Calu3 (cell line): ENCODE measurements at regions of chr6 and their contacts with region 1.

Region 1: DNA sequence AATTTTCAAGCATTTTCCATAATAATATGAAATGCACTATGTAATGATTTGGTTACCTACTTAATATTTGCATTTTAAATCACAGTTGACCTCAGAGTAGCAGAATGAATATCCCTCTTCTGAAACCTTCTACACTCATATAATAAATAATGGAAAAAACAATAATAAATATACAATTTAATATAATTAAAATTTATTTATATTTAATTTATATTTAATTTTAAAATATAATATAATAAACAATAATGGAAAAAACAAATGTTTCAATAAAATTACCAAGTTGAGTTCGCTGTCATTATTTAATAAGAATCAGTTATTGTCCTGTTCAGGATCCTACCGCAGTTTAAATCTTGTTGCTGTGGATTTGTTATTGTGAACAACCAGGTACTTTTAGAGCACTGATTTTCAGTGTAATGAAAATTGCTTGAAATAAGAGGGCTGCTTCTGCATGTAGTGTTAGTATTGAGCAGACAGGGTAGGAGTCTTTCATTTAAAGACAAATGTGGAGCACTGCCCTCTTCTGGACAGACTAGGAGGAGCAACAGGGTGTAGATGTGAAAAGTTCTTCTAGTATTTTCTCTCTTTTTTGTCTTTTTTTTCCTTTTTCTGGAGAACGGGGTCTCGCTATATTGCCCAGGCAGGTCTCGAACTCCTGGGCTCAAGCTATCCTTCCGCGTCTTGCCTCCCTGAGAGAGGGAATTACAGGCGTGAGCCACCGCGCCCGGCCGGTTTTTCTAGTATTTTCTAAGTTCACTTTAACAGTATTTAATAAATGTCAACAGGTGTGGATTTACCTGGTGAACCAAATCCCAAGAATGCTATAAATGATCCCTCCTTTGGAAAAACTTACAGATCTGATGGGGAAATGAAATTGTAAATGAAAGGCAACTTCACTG is 13.6 kb downstream of the TRAPPC3L start:
- DNase-seq: peak; percentile 48
- H3K4me3 Mint-ChIP-seq: no peak overlapping the region
- H3K27ac Mint-ChIP-seq: no peak overlapping the region
- H3K4me1 Mint-ChIP-seq: peaks cover 15% of the 10 kb centered on the region
- H3K27me3 Mint-ChIP-seq: peaks cover 27% of the 10 kb centered on the region
- CTCF ChIP-seq: peak; percentile 47

Region 2: GRCh38 chr6:116268589-116269293 is 263.2 kb before region 1 on chr6:
- CTCF ChIA-PET with region 1: interaction called, 7 read pairs
- intact Hi-C with region 1: loop called (anchors 5 kb)
- DNase-seq: peak; percentile 16
- H3K4me3 Mint-ChIP-seq: no peak overlapping the region
- H3K27ac Mint-ChIP-seq: no peak overlapping the region
- H3K4me1 Mint-ChIP-seq: no peaks in the 10 kb centered on the region
- H3K27me3 Mint-ChIP-seq: no peaks in the 10 kb centered on the region
- CTCF ChIP-seq: peak; percentile 78

Region 3: GRCh38 chr6:116287689-116288282 is 244.1 kb before region 1 on chr6:
- CTCF ChIA-PET with region 1: interaction called, 7 read pairs
- intact Hi-C with region 1: loop called (anchors 1 kb)
- DNase-seq: no peak
- H3K4me3 Mint-ChIP-seq: no peak overlapping the region
- H3K27ac Mint-ChIP-seq: no peak overlapping the region
- H3K4me1 Mint-ChIP-seq: no peaks in the 10 kb centered on the region
- H3K27me3 Mint-ChIP-seq: no peaks in the 10 kb centered on the region
- CTCF ChIP-seq: peak; percentile 58

Region 4: DNA sequence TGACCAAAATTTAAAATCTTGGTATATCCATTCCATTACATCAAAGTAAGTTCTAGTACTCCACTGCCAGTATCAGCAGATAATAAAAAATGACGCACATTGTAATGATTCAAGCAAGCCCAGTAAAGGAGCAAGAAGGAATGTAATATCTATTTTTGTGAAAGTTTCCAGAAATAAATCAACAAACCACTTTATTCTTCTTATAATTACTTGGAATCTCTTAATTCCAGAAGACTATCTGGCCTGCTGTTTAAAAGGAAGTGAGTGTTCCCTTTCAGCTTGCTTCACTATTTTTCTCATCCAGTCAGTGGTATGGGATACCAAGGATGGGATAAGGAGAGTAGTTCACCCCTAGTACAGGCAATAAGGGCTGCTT is 203.4 kb before region 1 on chr6:
- CTCF ChIA-PET with region 1: no interaction called
- intact Hi-C with region 1: no loop called
- DNase-seq: no peak
- H3K4me3 Mint-ChIP-seq: no peak overlapping the region
- H3K27ac Mint-ChIP-seq: no peak overlapping the region
- H3K4me1 Mint-ChIP-seq: no peaks in the 10 kb centered on the region
- H3K27me3 Mint-ChIP-seq: no peaks in the 10 kb centered on the region
- CTCF ChIP-seq: no peak

Region 5: DNA sequence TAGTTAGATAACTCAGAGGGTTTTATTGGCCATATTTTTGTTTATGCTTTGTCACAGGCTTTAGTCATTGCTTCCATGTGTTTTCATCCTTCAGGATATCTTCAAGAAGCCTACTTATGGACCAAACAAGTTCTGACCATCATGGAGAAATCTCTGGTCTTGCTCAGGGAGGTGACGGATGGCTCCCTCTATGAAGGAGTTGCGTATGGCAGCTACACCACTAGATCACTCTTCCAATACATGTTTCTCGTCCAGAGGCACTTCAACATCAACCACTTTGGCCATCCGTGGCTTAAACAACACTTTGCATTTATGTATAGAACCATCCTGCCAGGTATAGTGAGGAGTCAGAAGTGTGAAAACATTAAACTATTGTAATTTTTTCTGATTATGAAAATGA is 101.1 kb before region 1 on chr6:
- CTCF ChIA-PET with region 1: no interaction called
- intact Hi-C with region 1: no loop called
- DNase-seq: no peak
- H3K4me3 Mint-ChIP-seq: no peak overlapping the region
- H3K27ac Mint-ChIP-seq: no peak overlapping the region
- H3K4me1 Mint-ChIP-seq: no peaks in the 10 kb centered on the region
- H3K27me3 Mint-ChIP-seq: no peaks in the 10 kb centered on the region
- CTCF ChIP-seq: no peak

Region 6: GRCh38 chr6:116444092-116444491 is 87.8 kb before region 1 on chr6:
- CTCF ChIA-PET with region 1: no interaction called
- intact Hi-C with region 1: loop called (anchors 5 kb)
- DNase-seq: peak; percentile 22
- H3K4me3 Mint-ChIP-seq: no peak overlapping the region
- H3K27ac Mint-ChIP-seq: peak overlapping the region; percentile 28
- H3K4me1 Mint-ChIP-seq: peaks cover 33% of the 10 kb centered on the region
- H3K27me3 Mint-ChIP-seq: no peaks in the 10 kb centered on the region
- CTCF ChIP-seq: no peak

Region 7: GRCh38 chr6:116561377-116562018 is 29.6 kb after region 1 on chr6:
- CTCF ChIA-PET with region 1: interaction called, 3 read pairs
- intact Hi-C with region 1: loop called (anchors 1 kb)
- DNase-seq: peak; percentile 70
- H3K4me3 Mint-ChIP-seq: no peak overlapping the region
- H3K27ac Mint-ChIP-seq: no peak overlapping the region
- H3K4me1 Mint-ChIP-seq: peaks cover 23% of the 10 kb centered on the region
- H3K27me3 Mint-ChIP-seq: peaks cover 44% of the 10 kb centered on the region
- CTCF ChIP-seq: peak; percentile 78

Region 8: GRCh38 chr6:116648156-116648555 is 116.2 kb after region 1 on chr6:
- CTCF ChIA-PET with region 1: no interaction called
- intact Hi-C with region 1: loop called (anchors 2 kb)
- DNase-seq: no peak
- H3K4me3 Mint-ChIP-seq: no peak overlapping the region
- H3K27ac Mint-ChIP-seq: no peak overlapping the region
- H3K4me1 Mint-ChIP-seq: no peaks in the 10 kb centered on the region
- H3K27me3 Mint-ChIP-seq: no peaks in the 10 kb centered on the region
- CTCF ChIP-seq: no peak

Region 9: GRCh38 chr6:116847227-116847626 is 315.3 kb after region 1 on chr6:
- CTCF ChIA-PET with region 1: no interaction called
- intact Hi-C with region 1: loop called (anchors 10 kb)
- DNase-seq: no peak
- H3K4me3 Mint-ChIP-seq: no peak overlapping the region
- H3K27ac Mint-ChIP-seq: no peak overlapping the region
- H3K4me1 Mint-ChIP-seq: no peaks in the 10 kb centered on the region
- H3K27me3 Mint-ChIP-seq: no peaks in the 10 kb centered on the region
- CTCF ChIP-seq: no peak